Left ventricle myocardium superior (tissue), 1 donor: ENCODE measurements at regions of chr7 and their contacts with region 1.

Region 1: GRCh38 chr7:37916673-37917660 is at the start of gene SFRP4:
- DNase-seq: peak; percentile 78
- ATAC-seq: peak; percentile 62
- total RNA-seq, gene SFRP4: 1.0 TPM

Region 2: DNA sequence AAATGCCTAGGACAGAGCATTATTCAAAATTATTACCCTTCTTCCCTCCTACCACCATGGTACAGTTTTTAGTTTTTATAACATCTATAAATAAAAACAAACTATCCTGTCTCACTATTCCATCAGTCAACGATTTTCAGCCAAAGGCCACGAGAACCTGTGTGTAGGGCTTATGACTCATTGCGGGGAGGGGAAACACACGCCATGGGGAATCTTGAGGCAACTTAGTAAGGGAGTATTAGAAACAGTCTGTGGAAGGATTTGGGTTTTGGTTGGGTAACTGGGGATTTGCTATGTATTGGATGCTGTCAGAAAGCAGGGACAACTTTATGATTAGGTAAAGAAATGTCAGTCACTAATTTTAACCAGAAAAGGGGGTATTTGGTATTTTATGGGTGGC is 218.7 kb before region 1 on chr7:
- intact Hi-C with region 1: no loop called
- DNase-seq: no peak
- ATAC-seq: no peak

Region 3: GRCh38 chr7:37833107-37833817 is 83.7 kb before region 1 on chr7:
- intact Hi-C with region 1: no loop called
- DNase-seq: peak; percentile 41
- ATAC-seq: peak; percentile 50

Region 4: DNA sequence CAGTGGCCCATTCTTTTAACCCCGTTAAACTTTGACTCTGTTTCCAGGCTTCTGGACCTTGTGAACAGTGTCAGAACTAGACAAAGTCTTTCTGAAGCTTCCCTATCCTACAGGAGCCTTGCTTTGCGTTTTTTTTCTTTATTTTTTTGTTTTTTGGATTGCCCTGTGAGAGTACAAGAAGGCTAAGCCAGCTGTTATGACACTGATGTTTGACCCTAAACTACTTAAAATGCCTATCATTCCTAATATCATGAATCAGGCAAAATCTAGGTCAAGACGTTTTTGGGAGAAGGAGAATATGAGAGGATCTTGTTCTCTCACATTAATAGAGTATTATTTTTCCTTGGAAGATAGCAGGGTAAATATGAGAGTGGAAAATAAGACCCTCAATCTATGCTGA is 83.3 kb after region 1 on chr7:
- intact Hi-C with region 1: no loop called
- DNase-seq: no peak
- ATAC-seq: peak; percentile 38

Region 5: GRCh38 chr7:38107486-38107893 is 190.5 kb after region 1 on chr7:
- intact Hi-C with region 1: loop called (anchors 10 kb)
- DNase-seq: peak; percentile 37
- ATAC-seq: peak; percentile 72

Region 6: GRCh38 chr7:38673795-38674194 is 756.8 kb after region 1 on chr7:
- intact Hi-C with region 1: no loop called
- DNase-seq: no peak
- ATAC-seq: peak; percentile 67